GM13976 (cell line): ENCODE measurements at regions of chr1 and their contacts with region 1.

Region 1: GRCh38 chr1:185317034-185317885 is at the start of gene IVNS1ABP:
- DNase-seq: peak; percentile 96
- CTCF ChIP-seq: peak; percentile 66

Region 2: GRCh38 chr1:185156854-185157598 is 160.2 kb before region 1 on chr1 and contains the starts of genes SWT1 and TRMT1L:
- in situ Hi-C with region 1: no loop called
- DNase-seq: peak; percentile 94
- CTCF ChIP-seq: no peak

Region 3: GRCh38 chr1:185636848-185637247 is 319.6 kb after region 1 on chr1:
- in situ Hi-C with region 1: no loop called
- DNase-seq: peak; percentile 62
- CTCF ChIP-seq: no peak

Region 4: DNA sequence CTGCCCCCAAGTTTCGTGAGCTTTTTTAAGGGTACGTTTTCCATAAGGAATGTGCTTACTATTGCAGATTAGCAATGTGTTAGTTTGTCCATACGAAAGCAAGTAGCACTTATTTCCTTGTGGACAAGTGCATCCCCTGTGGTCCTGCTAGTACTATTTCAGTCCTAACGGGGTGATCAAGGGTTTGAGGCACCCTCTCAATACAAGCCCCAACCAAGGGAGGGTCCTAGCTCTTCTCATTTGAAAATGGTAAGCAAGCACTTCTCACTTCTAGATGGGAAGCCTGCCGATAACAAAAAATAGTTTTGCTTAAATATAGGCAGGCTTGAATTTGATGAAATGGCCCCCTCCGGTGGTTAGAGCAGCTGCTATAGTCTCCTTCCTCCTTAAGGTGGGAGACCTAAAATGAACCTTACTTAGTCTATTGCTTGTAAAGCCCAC is 352.9 kb after region 1 on chr1:
- in situ Hi-C with region 1: loop called (anchors 10 kb)
- DNase-seq: no peak
- CTCF ChIP-seq: peak; percentile 13